Natural killer cell (primary cell): ENCODE measurements at regions of chr19 and their contacts with region 1.

Region 1: GRCh38 chr19:3108775-3109174 is 14.6 kb downstream of the GNA11 start:
- DNase-seq: peak; percentile 60 to 86
- ATAC-seq: peak; percentile 68 to 88 (median 78)
- H3K4me3 ChIP-seq: no peak overlapping the region
- H3K4me3 Mint-ChIP-seq: no peak overlapping the region
- H3K27ac ChIP-seq: no peak overlapping the region
- H3K27ac Mint-ChIP-seq: no peak overlapping the region
- H3K4me1 ChIP-seq: peaks cover 10% of the 10 kb centered on the region
- H3K4me1 Mint-ChIP-seq: peaks cover 0 to 9% of the 10 kb centered on the region in 2 donors
- H3K27me3 ChIP-seq: no peaks in the 10 kb centered on the region
- H3K27me3 Mint-ChIP-seq: peaks cover 6 to 7% of the 10 kb centered on the region in 2 donors
- CTCF ChIP-seq: peak; percentile 83

Region 2: DNA sequence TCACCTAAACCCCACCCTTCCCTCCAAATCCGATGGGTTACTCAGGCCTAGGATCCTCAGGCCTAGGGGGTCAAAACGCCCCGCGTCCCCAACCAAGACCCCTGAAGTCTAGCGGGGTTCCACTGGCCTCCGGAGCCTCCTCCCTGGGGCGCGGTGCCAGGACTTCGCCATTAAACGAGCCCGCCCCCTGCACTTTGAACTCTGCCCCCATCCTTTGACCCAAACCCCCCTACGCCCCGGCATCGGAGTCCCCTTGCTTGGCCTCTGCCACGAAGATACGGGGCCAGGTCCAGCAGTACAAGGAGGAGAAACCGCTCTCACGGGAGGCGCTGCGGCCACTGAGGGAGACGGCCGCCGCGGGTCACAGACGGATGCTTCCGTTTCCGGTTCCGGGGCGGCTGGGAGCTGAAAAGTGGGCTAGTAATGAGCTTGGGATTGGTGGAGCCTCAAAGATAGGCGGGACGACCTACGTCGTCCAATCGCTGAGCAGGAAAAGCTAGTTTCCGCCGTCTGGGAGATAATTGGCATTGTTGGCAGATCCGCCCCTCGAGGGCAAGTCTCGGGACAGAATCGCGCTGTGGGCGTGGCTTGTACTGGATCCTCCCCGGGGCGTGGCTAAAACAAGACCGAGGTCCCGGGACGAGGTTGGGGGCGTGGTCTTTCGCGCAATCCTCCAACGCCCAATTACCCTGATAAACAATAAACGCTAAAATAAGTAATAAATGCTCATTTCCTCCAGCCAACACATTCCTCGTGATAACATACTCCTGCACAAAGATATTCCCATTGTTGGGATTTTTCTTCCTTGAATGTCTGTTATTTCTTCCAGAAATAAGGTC is 158.3 kb before region 1 on chr19:
- intact Hi-C with region 1: loop called (anchors 1 kb)
- DNase-seq: peak; percentile 100
- ATAC-seq: peak; percentile 90 to 97 (median 94)
- H3K4me3 ChIP-seq: peak overlapping the region; percentile 68
- H3K4me3 Mint-ChIP-seq: peak overlapping the region; percentile 95
- H3K27ac ChIP-seq: peak overlapping the region; percentile 92
- H3K27ac Mint-ChIP-seq: peak overlapping the region; percentile 97 to 99
- H3K4me1 ChIP-seq: peaks cover 17% of the 10 kb centered on the region
- H3K4me1 Mint-ChIP-seq: peaks cover 24 to 25% of the 10 kb centered on the region in 2 donors
- H3K27me3 ChIP-seq: no peaks in the 10 kb centered on the region
- H3K27me3 Mint-ChIP-seq: no peaks in the 10 kb centered on the region
- CTCF ChIP-seq: no peak

Region 3: GRCh38 chr19:2962045-2962561 is 146.7 kb before region 1 on chr19:
- intact Hi-C with region 1: loop called (anchors 1 kb)
- DNase-seq: peak; percentile 28 to 93
- ATAC-seq: peak; percentile 87 to 99 (median 95)
- H3K4me3 ChIP-seq: no peak overlapping the region
- H3K4me3 Mint-ChIP-seq: no peak overlapping the region
- H3K27ac ChIP-seq: no peak overlapping the region
- H3K27ac Mint-ChIP-seq: peak overlapping the region; percentile 67 to 78
- H3K4me1 ChIP-seq: peaks cover 9% of the 10 kb centered on the region
- H3K4me1 Mint-ChIP-seq: no peaks in the 10 kb centered on the region
- H3K27me3 ChIP-seq: no peaks in the 10 kb centered on the region
- H3K27me3 Mint-ChIP-seq: no peaks in the 10 kb centered on the region
- CTCF ChIP-seq: peak; percentile 79

Region 4: DNA sequence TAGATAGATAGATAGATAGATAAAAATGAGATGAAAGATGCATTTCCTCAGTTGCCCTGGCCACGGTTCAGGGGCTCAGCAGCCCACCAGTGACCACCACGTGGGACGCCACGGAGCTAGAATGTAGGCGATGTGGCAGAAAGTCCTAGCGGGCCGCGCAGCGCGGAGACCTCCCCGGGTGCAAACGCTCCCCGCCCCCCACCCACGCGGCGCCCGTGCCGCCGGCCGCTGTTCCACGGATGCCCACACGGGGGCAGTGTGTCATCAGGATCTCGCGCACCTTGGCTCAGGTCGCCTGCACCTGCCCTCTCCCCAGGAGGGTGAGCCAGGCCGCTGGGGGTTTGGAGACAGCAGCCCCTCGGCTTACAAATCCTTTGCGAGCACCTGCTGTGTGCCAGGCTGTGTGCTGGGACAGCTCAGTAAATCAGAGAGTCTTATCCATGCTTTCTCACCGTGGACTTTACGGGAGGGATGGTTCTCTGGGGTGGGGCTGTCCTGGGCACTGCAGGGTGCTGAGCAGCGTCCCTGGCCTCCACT is 32.8 kb before region 1 on chr19:
- intact Hi-C with region 1: loop called (anchors 1 kb)
- DNase-seq: peak; percentile 70 to 89
- ATAC-seq: peak; percentile 82 to 98 (median 97)
- H3K4me3 ChIP-seq: no peak overlapping the region
- H3K4me3 Mint-ChIP-seq: no peak overlapping the region
- H3K27ac ChIP-seq: no peak overlapping the region
- H3K27ac Mint-ChIP-seq: no peak overlapping the region
- H3K4me1 ChIP-seq: peaks cover 8% of the 10 kb centered on the region
- H3K4me1 Mint-ChIP-seq: peaks cover 0 to 5% of the 10 kb centered on the region in 2 donors
- H3K27me3 ChIP-seq: no peaks in the 10 kb centered on the region
- H3K27me3 Mint-ChIP-seq: no peaks in the 10 kb centered on the region
- CTCF ChIP-seq: peak; percentile 92